CD4-positive, alpha-beta memory T cell (primary cell): ENCODE measurements at regions of chr3 and their contacts with region 1.

Region 1: DNA sequence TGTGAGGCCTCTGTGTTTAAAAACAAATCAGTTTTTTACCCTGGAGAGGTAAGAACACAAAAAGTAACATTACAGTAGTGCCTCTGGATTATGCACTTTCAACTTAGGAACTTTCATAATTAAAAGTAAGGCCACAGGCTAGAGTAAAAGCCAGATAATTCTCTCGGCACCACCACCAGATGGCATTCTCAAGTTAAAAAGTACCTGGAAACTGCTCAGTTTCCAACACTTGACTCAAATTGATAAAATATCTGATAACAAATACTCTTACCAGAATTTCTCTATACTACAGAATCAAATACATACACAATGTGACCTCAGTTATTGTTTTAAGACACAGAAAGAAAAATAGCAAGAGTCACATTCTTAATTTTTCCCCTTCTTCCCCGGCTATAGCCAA is 19.9 kb downstream of the SPICE1 start:
- DNase-seq: peak; percentile 38 to 46 (median 41)
- H3K4me3 ChIP-seq: no peak overlapping the region
- H3K4me3 Mint-ChIP-seq: no peak overlapping the region
- H3K27ac ChIP-seq: no peak overlapping the region
- H3K27ac Mint-ChIP-seq: peak overlapping the region in 1 of 7 donors; percentile 43
- H3K4me1 ChIP-seq: no peaks in the 10 kb centered on the region
- H3K4me1 Mint-ChIP-seq: peaks cover 0 to 4% (median 2%) of the 10 kb centered on the region in 4 donors
- H3K27me3 ChIP-seq: no peaks in the 10 kb centered on the region
- H3K27me3 Mint-ChIP-seq: no peaks in the 10 kb centered on the region

Region 2: DNA sequence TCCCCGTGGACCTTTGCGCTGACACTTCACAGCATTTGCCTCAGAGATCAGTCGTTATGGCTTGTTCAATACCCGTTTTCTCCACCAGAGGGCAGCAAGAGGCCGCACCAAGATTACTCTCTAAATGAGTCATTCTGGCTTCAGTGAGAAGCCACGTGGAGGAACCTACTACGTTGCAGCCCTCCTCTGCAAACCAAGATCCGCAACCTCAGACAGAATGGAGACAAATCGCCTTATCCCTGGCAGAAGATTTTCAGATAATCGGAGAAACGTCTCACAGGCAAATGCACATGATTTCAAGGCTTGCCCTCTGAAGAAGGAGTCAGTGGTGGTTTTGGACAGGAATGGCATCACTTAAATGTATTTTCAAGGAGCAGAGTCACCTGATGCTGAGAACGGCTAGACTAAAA is 443.7 kb before region 1 on chr3:
- CTCF ChIA-PET with region 1: no interaction called
- POLR2A ChIA-PET with region 1: no interaction called
- intact Hi-C with region 1: loop called (anchors 5 kb)
- DNase-seq: peak; percentile 77 to 84 (median 80)
- H3K4me3 ChIP-seq: no peak overlapping the region
- H3K4me3 Mint-ChIP-seq: no peak overlapping the region
- H3K27ac ChIP-seq: no peak overlapping the region
- H3K27ac Mint-ChIP-seq: no peak overlapping the region
- H3K4me1 ChIP-seq: peaks cover 8% of the 10 kb centered on the region
- H3K4me1 Mint-ChIP-seq: peaks cover 0 to 9% (median 2%) of the 10 kb centered on the region in 4 donors
- H3K27me3 ChIP-seq: no peaks in the 10 kb centered on the region
- H3K27me3 Mint-ChIP-seq: no peaks in the 10 kb centered on the region

Region 3: DNA sequence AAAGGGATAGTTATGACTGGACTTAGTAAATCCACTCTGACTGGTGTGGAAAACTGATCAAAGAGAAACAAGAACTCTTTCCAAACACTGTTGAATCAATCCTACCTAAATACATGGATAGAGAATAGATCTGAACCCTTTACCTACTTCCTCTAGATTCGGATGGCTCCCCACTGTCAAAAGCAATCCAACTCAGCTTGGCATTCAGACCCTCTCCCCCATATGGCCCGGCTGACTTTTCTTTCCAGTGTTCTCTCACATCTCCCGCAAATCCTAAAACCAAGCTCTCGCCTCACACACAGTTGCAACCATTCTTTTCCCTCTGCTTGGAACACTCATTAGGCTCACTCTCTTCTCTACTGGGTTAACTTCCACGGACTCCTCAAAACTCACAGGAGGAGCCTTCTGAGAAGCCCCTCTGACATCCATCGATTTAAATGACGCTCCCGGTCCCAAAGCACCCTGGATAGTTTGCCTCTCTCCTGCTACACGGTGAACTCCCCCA is 19.3 kb after region 1 on chr3:
- CTCF ChIA-PET with region 1: interaction called, 68 read pairs
- POLR2A ChIA-PET with region 1: interaction called, 7 read pairs
- intact Hi-C with region 1: loop called (anchors 1 kb)
- DNase-seq: no peak
- H3K4me3 ChIP-seq: peak overlapping the region; percentile 61 to 93
- H3K4me3 Mint-ChIP-seq: no peak overlapping the region
- H3K27ac ChIP-seq: peak overlapping the region; percentile 74
- H3K27ac Mint-ChIP-seq: no peak overlapping the region
- H3K4me1 ChIP-seq: peaks cover 19% of the 10 kb centered on the region
- H3K4me1 Mint-ChIP-seq: peaks cover 6 to 24% (median 9%) of the 10 kb centered on the region in 4 donors
- H3K27me3 ChIP-seq: peaks cover 4% of the 10 kb centered on the region
- H3K27me3 Mint-ChIP-seq: peaks cover 3 to 8% of the 10 kb centered on the region in 2 donors

Region 4: DNA sequence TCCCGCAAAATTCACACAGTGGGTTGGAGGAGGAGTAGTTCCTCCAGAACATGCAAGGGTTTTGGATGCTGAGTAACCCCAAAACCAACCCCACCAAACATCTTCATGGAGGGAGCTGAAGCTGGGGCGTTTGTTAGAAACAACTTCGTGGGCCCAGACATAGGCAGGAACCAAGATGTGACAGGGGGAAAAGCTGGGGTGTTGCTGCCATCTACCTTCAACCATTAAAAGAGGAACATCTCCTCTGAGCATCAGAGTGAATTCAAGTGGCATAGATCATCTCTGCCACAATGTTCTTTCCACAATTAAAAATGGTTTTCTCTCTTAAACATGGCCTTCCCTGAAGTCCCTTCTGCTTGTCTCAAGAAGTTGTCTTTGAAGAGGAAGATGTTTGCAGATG is 57.8 kb after region 1 on chr3:
- CTCF ChIA-PET with region 1: interaction called, 64 read pairs
- POLR2A ChIA-PET with region 1: no interaction called
- intact Hi-C with region 1: loop called (anchors 1 kb)
- DNase-seq: peak; percentile 19 to 40 (median 27)
- H3K4me3 ChIP-seq: no peak overlapping the region
- H3K4me3 Mint-ChIP-seq: no peak overlapping the region
- H3K27ac ChIP-seq: no peak overlapping the region
- H3K27ac Mint-ChIP-seq: peak overlapping the region in 3 of 7 donors; percentile 2 to 77 (median 25)
- H3K4me1 ChIP-seq: peaks cover 15% of the 10 kb centered on the region
- H3K4me1 Mint-ChIP-seq: peaks cover 31 to 63% (median 38%) of the 10 kb centered on the region in 4 donors
- H3K27me3 ChIP-seq: no peaks in the 10 kb centered on the region
- H3K27me3 Mint-ChIP-seq: no peaks in the 10 kb centered on the region

Region 5: GRCh38 chr3:113575206-113575605 is 80.2 kb after region 1 on chr3:
- CTCF ChIA-PET with region 1: interaction called, 215 read pairs
- POLR2A ChIA-PET with region 1: interaction called, 9 read pairs
- intact Hi-C with region 1: loop called (anchors 1 kb)
- DNase-seq: no peak
- H3K4me3 ChIP-seq: no peak overlapping the region
- H3K4me3 Mint-ChIP-seq: no peak overlapping the region
- H3K27ac ChIP-seq: no peak overlapping the region
- H3K27ac Mint-ChIP-seq: peak overlapping the region in 4 of 7 donors; percentile 49 to 86 (median 74)
- H3K4me1 ChIP-seq: no peaks in the 10 kb centered on the region
- H3K4me1 Mint-ChIP-seq: peaks cover 7 to 10% (median 8%) of the 10 kb centered on the region in 4 donors
- H3K27me3 ChIP-seq: no peaks in the 10 kb centered on the region
- H3K27me3 Mint-ChIP-seq: no peaks in the 10 kb centered on the region

Region 6: DNA sequence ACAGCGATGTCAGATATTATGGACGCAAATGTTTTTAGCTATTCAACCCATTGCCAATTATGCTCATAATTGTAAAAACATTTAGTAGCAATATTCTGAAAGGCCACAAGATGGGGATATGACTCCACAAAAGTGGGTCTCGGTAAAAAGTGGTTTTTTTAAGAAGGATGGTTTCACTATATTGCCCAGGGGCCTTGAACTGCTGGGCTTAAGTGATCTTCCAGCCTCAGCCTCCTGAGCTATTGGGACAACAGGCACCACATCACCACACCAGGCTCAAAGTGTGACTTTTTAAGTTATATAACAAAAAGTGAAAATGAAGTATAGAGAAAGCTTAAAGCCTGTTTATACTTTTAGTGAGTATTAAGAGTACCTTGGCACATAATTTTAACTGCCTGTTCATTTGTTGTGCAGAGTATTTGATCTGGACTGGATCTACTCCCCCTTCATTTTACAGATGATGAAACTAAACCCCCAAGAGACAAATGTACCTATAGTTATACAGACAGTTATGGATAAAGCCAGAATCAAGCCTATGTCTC is 241.6 kb after region 1 on chr3:
- CTCF ChIA-PET with region 1: interaction called, 42 read pairs
- POLR2A ChIA-PET with region 1: no interaction called
- intact Hi-C with region 1: loop called (anchors 2 kb)
- DNase-seq: peak; percentile 47 to 72 (median 71)
- H3K4me3 ChIP-seq: no peak overlapping the region
- H3K4me3 Mint-ChIP-seq: peak overlapping the region in 1 of 8 donors; percentile 15
- H3K27ac ChIP-seq: peak overlapping the region; percentile 32
- H3K27ac Mint-ChIP-seq: peak overlapping the region; percentile 48 to 88 (median 77)
- H3K4me1 ChIP-seq: peaks cover 32% of the 10 kb centered on the region
- H3K4me1 Mint-ChIP-seq: peaks cover 35 to 61% (median 42%) of the 10 kb centered on the region in 4 donors
- H3K27me3 ChIP-seq: no peaks in the 10 kb centered on the region
- H3K27me3 Mint-ChIP-seq: no peaks in the 10 kb centered on the region

Region 7: GRCh38 chr3:113947372-113948014 is 452.5 kb after region 1 on chr3 and contains the start of gene ZDHHC23:
- CTCF ChIA-PET with region 1: no interaction called
- POLR2A ChIA-PET with region 1: no interaction called
- intact Hi-C with region 1: no loop called
- DNase-seq: peak; percentile 71 to 79 (median 75)
- H3K4me3 ChIP-seq: peak within 1 kb of the TSS; percentile 57 to 66
- H3K4me3 Mint-ChIP-seq: peak within 1 kb of the TSS; percentile 86 to 90 (median 87)
- H3K27ac ChIP-seq: peak within 1 kb of the TSS; percentile 19
- H3K27ac Mint-ChIP-seq: peak within 1 kb of the TSS; percentile 78 to 87 (median 82)
- H3K4me1 ChIP-seq: peaks cover 14% of the 10 kb centered on the region
- H3K4me1 Mint-ChIP-seq: peaks cover 8 to 23% (median 11%) of the 10 kb centered on the region in 4 donors
- H3K27me3 ChIP-seq: no peaks in the 10 kb centered on the region
- H3K27me3 Mint-ChIP-seq: peaks cover 3 to 5% of the 10 kb centered on the region in 2 donors
- total RNA-seq, gene ZDHHC23: 5.2 to 7.3 TPM

Region 8: DNA sequence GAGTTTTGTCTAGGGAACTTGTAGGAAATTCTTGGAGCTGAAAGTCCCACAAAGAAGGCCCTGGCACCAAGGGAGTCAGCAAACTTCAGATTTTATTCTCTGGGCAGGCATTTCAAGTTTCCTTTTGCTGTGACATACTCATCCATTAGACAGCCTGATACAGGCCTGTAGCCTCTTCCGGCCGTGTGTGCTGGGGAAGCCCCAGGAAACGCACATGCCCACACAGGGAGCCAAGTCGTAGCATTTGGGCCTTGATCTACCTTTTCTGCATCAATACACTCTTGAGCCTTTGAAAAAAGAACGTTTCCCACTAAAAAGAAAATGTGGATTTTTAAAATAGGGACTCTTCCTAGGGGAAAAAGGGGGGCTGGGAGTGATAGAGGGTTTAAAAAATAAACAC is 813.8 kb after region 1 on chr3:
- CTCF ChIA-PET with region 1: no interaction called
- POLR2A ChIA-PET with region 1: no interaction called
- intact Hi-C with region 1: no loop called
- DNase-seq: peak; percentile 68 to 83 (median 72)
- H3K4me3 ChIP-seq: peak overlapping the region in 1 of 2 donors; percentile 12
- H3K4me3 Mint-ChIP-seq: peak overlapping the region; percentile 37 to 88 (median 68)
- H3K27ac ChIP-seq: peak overlapping the region; percentile 88
- H3K27ac Mint-ChIP-seq: peak overlapping the region; percentile 92 to 98 (median 95)
- H3K4me1 ChIP-seq: peaks cover 72% of the 10 kb centered on the region
- H3K4me1 Mint-ChIP-seq: peaks cover 53 to 66% (median 59%) of the 10 kb centered on the region in 4 donors
- H3K27me3 ChIP-seq: no peaks in the 10 kb centered on the region
- H3K27me3 Mint-ChIP-seq: no peaks in the 10 kb centered on the region